Panc1 (cell line): ENCODE measurements at regions of chr12 and their contacts with region 1.

Region 1: GRCh38 chr12:128456922-128457321 is 190.0 kb downstream of the TMEM132C start:
- DNase-seq: no peak
- ATAC-seq: no peak
- H3K4me3 ChIP-seq: no peak overlapping the region
- H3K27ac ChIP-seq: no peak overlapping the region
- H3K4me1 ChIP-seq: no peaks in the 10 kb centered on the region
- H3K27me3 ChIP-seq: no peaks in the 10 kb centered on the region
- CTCF ChIP-seq: no peak

Region 2: GRCh38 chr12:128445415-128446127 is 11.4 kb before region 1 on chr12:
- CTCF ChIA-PET with region 1: no interaction called
- POLR2A ChIA-PET with region 1: no interaction called
- in situ Hi-C with region 1: no loop called
- intact Hi-C with region 1: no loop called
- DNase-seq: no peak
- ATAC-seq: no peak
- H3K4me3 ChIP-seq: no peak overlapping the region
- H3K27ac ChIP-seq: no peak overlapping the region
- H3K4me1 ChIP-seq: no peaks in the 10 kb centered on the region
- H3K27me3 ChIP-seq: no peaks in the 10 kb centered on the region
- CTCF ChIP-seq: no peak

Region 3: DNA sequence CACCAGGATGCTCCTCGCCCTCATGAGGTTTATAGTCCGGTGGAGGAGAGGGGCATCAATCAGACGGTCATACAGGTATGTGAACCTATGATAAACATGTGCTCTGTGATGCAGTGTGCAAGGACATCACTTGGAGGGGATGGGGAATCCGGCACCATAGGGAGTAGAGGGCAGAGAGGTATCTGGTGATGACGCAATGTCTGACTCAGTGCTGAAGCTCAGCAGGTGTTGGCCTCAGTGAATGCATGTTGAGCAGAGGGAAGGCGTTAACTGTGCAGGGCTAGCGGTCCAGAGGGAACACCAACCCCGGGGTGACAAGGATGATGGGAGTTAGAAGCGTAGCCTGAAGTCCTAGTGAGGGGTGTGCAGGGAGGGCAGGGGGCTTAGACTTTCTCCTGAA is 11.0 kb after region 1 on chr12:
- CTCF ChIA-PET with region 1: no interaction called
- POLR2A ChIA-PET with region 1: interaction called, 10 read pairs
- in situ Hi-C with region 1: no loop called
- intact Hi-C with region 1: no loop called
- DNase-seq: no peak
- ATAC-seq: no peak
- H3K4me3 ChIP-seq: no peak overlapping the region
- H3K27ac ChIP-seq: no peak overlapping the region
- H3K4me1 ChIP-seq: no peaks in the 10 kb centered on the region
- H3K27me3 ChIP-seq: no peaks in the 10 kb centered on the region
- CTCF ChIP-seq: no peak

Region 4: GRCh38 chr12:128519426-128519825 is 62.5 kb after region 1 on chr12:
- CTCF ChIA-PET with region 1: no interaction called
- POLR2A ChIA-PET with region 1: no interaction called
- in situ Hi-C with region 1: no loop called
- intact Hi-C with region 1: no loop called
- DNase-seq: no peak
- ATAC-seq: no peak
- H3K4me3 ChIP-seq: no peak overlapping the region
- H3K27ac ChIP-seq: no peak overlapping the region
- H3K4me1 ChIP-seq: no peaks in the 10 kb centered on the region
- H3K27me3 ChIP-seq: no peaks in the 10 kb centered on the region; the same call in 1 of the 2 replicates
- CTCF ChIP-seq: no peak

Region 5: DNA sequence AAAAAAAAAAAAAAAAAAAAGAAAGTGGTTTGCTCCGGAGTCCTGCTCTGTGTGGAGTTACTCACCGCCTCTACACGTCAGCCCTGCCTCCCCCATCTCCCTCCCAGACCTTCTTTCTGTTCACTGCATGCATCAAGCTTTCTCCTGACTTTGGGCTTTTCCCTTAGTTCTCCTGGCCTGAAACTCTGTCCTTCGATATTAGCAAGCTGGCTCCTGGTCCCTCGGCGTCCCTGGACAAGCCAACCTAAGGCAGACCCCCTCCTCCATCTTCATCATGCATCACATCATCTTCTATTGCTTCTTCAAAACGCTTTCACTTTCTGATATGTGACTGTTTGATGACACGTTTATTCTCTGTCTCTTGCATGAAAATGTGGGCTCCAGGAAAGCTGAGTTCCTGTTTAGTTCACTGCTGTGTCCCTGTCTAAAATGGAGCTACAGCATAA is 326.2 kb after region 1 on chr12:
- CTCF ChIA-PET with region 1: no interaction called
- POLR2A ChIA-PET with region 1: no interaction called
- in situ Hi-C with region 1: no loop called
- intact Hi-C with region 1: no loop called
- DNase-seq: no peak
- ATAC-seq: no peak
- H3K4me3 ChIP-seq: no peak overlapping the region
- H3K27ac ChIP-seq: no peak overlapping the region
- H3K4me1 ChIP-seq: no peaks in the 10 kb centered on the region
- H3K27me3 ChIP-seq: no peaks in the 10 kb centered on the region
- CTCF ChIP-seq: no peak